Left ventricle myocardium inferior (tissue), 1 donor: ENCODE measurements at regions of chr1 and their contacts with region 1.

Region 1: GRCh38 chr1:206663832-206664652 is 20.7 kb upstream of the MAPKAPK2 start:
- DNase-seq: peak; percentile 65
- H3K4me3 ChIP-seq: peak overlapping the region; percentile 63
- H3K27ac ChIP-seq: peak overlapping the region; percentile 96
- H3K4me1 ChIP-seq: peaks cover 74% of the 10 kb centered on the region
- H3K27me3 ChIP-seq: no peaks in the 10 kb centered on the region
- CTCF ChIP-seq: peak; percentile 85

Region 2: DNA sequence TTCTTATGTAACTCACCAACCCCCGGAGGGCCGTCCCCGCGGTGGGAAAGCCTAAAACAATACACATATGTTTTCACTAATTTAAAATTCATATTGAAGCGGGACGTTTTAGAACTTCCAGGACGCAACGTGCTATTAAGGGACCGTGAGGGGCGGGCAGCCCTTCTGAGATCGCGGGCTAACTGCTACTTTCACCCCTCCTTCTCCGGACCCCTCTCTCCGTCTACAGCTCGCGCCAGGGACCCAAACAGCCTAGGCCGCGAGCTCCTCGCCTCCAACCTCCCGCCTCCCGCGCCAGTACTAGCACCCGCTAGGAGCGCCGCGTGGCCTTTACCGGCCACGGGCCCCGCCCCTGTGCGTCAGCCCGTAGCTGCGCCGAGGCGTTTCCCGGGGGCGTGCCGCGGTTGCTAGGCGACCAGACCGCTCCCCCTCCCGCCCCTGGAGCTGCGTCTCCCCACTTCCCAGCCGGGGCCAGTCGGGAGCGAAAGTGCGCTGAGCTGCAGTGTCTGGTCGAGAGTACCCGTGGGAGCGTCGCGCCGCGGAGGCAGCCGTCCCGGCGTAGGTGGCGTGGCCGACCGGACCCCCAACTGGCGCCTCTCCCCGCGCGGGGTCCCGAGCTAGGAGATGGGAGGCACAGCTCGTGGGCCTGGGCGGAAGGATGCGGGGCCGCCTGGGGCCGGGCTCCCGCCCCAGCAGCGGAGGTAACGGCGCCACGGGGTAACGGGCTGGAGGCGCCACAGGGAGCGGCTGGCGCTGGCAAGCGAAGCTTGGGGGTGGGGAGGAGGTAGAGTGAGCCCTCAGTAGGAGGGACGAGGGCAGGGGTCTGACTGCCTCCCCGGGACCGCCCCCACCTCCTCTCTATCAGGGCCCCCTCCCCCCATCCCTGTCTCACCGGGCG is 28.7 kb before region 1 on chr1 and contains the start of gene DYRK3:
- intact Hi-C with region 1: loop called (anchors 2 kb)
- DNase-seq: peak; percentile 96
- H3K4me3 ChIP-seq: peak within 1 kb of the TSS; percentile 98
- H3K27ac ChIP-seq: peak within 1 kb of the TSS; percentile 91
- H3K4me1 ChIP-seq: peaks cover 61% of the 10 kb centered on the region
- H3K27me3 ChIP-seq: no peaks in the 10 kb centered on the region
- CTCF ChIP-seq: peak; percentile 30
- total RNA-seq, gene DYRK3: 26.6 TPM

Region 3: DNA sequence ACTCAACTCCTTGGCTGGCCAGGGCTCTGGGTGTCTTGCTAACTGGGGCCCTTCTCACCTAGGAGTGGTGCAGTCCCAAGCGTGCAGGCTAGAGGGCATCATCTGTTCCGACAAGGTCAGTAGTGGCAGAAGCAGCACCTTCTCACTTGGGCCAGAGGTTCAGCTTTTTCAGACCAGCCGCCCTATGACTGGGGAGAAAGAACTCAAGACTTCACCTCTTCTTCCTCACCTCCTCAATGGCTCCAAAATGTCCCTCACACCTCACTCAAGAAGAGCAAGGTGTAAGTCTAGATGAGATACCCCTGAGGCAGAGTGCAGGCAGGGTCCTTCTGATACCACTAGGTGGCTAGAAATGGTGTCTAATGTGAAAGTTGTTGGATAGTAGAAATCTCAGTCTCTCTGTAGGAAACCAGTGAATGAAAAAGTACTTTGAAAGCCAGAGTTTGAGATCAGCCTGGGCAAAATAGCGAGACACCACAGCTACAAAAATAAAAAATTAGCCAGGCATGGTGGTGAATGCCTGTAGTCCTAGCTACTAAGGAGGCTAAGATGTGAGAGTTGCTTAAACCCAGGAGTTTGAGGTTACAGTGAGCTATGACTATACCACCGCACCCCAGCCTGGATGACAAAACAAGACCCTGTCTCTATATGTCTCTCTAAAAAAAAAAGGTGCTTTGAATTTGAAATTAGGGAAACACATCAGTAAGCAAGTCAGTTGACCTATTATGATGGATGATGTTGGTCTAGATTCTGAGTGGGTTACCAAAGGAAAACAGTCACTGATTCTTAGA is 192.8 kb after region 1 on chr1:
- intact Hi-C with region 1: no loop called
- DNase-seq: no peak
- H3K4me3 ChIP-seq: no peak overlapping the region
- H3K27ac ChIP-seq: no peak overlapping the region
- H3K4me1 ChIP-seq: no peaks in the 10 kb centered on the region
- H3K27me3 ChIP-seq: peaks cover 35% of the 10 kb centered on the region
- CTCF ChIP-seq: no peak

Region 4: DNA sequence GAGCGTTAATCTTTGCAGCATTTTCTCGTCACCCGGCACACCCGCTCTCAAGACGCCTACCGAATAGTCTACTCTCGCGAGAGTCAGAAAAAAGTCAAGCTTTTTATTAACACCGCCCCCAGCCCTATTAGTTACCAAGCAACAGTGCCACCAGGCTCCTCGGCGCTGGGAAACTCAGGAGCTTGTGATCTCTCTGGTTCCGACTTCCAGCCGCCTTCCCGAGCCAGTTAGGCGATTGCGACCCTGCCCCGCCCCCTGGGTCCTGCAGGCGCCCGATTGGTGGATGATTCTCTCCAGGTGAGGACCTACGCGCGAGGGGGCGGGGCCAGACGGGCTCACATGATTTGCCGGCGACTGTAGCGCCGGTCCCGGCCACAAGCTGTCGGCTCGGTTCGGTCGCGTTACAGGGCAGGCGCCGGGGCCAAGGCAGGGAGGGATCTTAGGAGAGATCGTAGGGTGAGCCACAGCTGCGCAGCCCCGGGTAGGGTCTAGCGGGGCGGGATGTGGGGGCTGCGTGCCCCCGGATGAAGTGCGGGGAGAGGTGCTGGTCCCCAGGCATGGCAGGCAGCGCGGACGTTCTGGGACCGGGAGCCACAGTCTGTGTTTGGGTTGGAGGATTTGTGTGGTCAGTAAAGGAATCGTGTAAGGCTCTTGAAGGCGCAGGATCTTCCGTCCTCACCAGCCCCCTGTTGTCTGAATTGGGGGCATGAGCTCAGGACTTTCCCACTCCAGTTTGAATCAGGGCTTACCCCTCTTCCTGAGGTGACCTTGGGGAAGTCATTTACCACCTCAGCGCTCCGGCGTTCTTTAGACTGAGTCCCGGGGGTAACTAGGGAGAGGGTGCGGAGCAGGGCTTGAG is 389.1 kb after region 1 on chr1 and contains the start of gene PFKFB2:
- intact Hi-C with region 1: no loop called
- DNase-seq: peak; percentile 97
- H3K4me3 ChIP-seq: peak within 1 kb of the TSS; percentile 84
- H3K27ac ChIP-seq: peak within 1 kb of the TSS; percentile 97
- H3K4me1 ChIP-seq: peaks cover 62% of the 10 kb centered on the region
- H3K27me3 ChIP-seq: no peaks in the 10 kb centered on the region
- CTCF ChIP-seq: peak; percentile 51
- total RNA-seq, gene PFKFB2: 107 TPM